HCT116 (cell line): ENCODE measurements at regions of chr13 and their contacts with region 1.

Region 1: DNA sequence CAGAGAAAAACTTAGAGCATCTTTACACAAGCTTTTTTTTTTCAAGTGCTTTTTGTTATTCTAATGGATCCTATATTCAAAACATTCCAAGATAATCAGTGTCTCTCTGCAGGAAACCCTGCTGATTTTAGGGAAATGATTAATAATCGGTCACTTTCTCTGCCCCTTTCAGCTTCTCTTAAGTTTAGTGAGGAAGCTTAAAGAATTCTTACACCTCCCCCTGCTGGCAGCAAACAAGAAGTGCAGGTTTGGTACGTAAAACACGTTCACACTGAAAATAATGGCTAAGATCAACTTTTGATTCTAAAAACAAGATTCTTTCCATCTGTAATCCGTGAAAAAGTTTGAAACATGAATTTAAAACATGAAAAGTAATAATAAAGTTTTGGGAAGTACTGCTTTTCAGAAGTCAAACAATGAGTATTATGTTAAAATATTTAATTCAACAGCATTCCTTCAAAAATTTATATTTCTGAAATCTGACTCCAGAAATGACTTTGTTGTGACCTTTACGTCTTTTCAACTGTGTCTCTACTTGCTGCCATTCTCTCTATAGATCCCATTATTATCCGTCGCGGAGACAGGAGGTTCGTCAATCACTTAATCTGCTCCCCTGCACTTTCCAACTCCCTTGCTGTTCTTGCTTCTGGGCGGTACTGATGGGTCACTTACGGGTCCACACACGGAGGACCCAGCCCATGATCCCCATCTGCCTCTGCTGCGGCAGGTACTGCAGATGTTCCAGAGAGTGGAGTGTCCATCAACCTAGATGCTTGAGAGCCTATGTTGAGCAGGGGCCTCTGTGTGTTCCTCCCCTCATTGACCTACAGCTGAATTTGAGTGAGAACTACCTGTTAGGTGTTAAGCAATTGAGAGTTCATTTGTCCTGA is 203.1 kb upstream of the EDNRB start:
- DNase-seq: peak; percentile 34
- ATAC-seq: peak; percentile 57; the same call in 1 of the 2 replicates
- H3K4me3 ChIP-seq: no peak overlapping the region
- H3K27ac ChIP-seq: no peak overlapping the region
- H3K4me1 ChIP-seq: no peaks in the 10 kb centered on the region
- H3K27me3 ChIP-seq: no peaks in the 10 kb centered on the region
- CTCF ChIP-seq: peak; percentile 25 to 77 (median 71); a peak in 5 of 6 replicates
- POLR2A ChIP-seq: no peak
- RAD21 ChIP-seq: peak; percentile 48

Region 2: DNA sequence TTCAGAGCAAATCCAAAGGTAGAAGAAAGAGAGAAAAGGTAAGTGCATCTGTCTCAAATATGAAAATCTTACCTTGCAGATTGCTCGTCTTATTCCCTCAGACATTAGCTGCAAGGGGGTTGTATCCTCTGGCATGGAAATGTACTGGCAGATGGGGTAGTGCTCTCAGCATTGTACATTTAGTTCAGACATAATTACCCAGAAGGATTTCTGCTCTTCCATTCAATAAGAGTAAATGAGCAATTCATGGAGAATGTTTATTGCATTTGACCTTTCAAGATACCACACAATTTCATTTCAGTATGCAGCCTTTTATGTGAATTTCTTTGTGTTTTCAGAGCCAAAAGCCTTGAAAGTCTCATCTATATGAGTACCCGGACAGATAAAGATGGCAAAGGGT is 522.4 kb before region 1 on chr13:
- CTCF ChIA-PET with region 1: no interaction called
- POLR2A ChIA-PET with region 1: no interaction called
- RAD21 ChIA-PET with region 1: no interaction called
- intact Hi-C with region 1: loop called (anchors 10 kb)
- DNase-seq: no peak
- ATAC-seq: no peak
- H3K4me3 ChIP-seq: no peak overlapping the region
- H3K27ac ChIP-seq: no peak overlapping the region
- H3K4me1 ChIP-seq: no peaks in the 10 kb centered on the region
- H3K27me3 ChIP-seq: peaks cover 8% of the 10 kb centered on the region
- CTCF ChIP-seq: no peak
- POLR2A ChIP-seq: no peak
- RAD21 ChIP-seq: no peak

Region 3: GRCh38 chr13:77779552-77780272 is 342.0 kb before region 1 on chr13:
- CTCF ChIA-PET with region 1: interaction called, 11 read pairs
- POLR2A ChIA-PET with region 1: no interaction called
- RAD21 ChIA-PET with region 1: no interaction called
- intact Hi-C with region 1: loop called (anchors 1 kb)
- DNase-seq: peak; percentile 18
- ATAC-seq: no peak
- H3K4me3 ChIP-seq: no peak overlapping the region
- H3K27ac ChIP-seq: no peak overlapping the region
- H3K4me1 ChIP-seq: no peaks in the 10 kb centered on the region
- H3K27me3 ChIP-seq: no peaks in the 10 kb centered on the region
- CTCF ChIP-seq: peak; percentile 15 to 53 (median 41); a peak in 4 of 6 replicates
- POLR2A ChIP-seq: no peak
- RAD21 ChIP-seq: peak; percentile 50; the same call in 1 of the 2 replicates